ENCODE measurements at regions of chr16 and their contacts with region 1.

Region 1: GRCh38 chr16:22397464-22397863 is 23.0 kb upstream of the CDR2 start:
- DNase-seq: no peak
- ATAC-seq: no peak
- H3K4me3 ChIP-seq: no peak overlapping the region
- H3K27ac ChIP-seq: no peak overlapping the region
- H3K4me1 ChIP-seq: peaks cover 0 to 11% (median 0%) of the 10 kb centered on the region in 9 donors
- H3K27me3 ChIP-seq: no peaks in the 10 kb centered on the region
- CTCF ChIP-seq: no peak

Region 2: GRCh38 chr16:22325598-22326368 is 71.7 kb before region 1 on chr16:
- intact Hi-C with region 1: no loop called
- DNase-seq: no peak
- ATAC-seq: no peak
- H3K4me3 ChIP-seq: no peak overlapping the region
- H3K27ac ChIP-seq: no peak overlapping the region
- H3K4me1 ChIP-seq: peaks cover 0 to 14% (median 4%) of the 10 kb centered on the region in 9 donors
- H3K27me3 ChIP-seq: no peaks in the 10 kb centered on the region
- CTCF ChIP-seq: no peak

Region 3: DNA sequence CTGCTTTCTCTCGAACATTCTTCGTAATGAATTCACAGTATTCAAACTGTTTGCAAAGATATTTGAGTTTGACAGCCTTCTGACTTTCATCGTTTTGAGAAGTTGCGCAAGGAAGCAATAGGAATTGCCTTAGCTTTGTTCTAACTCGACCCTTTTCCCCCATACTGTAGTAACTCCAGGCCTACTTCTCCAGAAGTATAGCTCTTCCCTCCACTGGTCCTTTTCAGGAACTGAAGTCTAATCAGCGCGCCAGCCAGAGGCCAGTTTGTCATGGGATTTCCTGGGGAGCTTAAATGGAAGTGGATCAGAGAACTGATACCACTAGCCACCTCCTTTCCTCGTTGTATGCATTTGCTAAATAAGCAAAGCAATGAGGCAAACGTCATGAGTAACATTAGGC is 51.0 kb before region 1 on chr16:
- intact Hi-C with region 1: loop called in 1 of 10 experiments (anchors 10 kb)
- DNase-seq: no peak
- ATAC-seq: peak in 6 of 8 donors; percentile 29 to 69 (median 43)
- H3K4me3 ChIP-seq: no peak overlapping the region
- H3K27ac ChIP-seq: peak overlapping the region in 4 of 10 donors; percentile 2 to 45 (median 24)
- H3K4me1 ChIP-seq: peaks cover 0 to 16% (median 3%) of the 10 kb centered on the region in 9 donors
- H3K27me3 ChIP-seq: no peaks in the 10 kb centered on the region
- CTCF ChIP-seq: no peak

Region 4: GRCh38 chr16:22739077-22739476 is 341.6 kb after region 1 on chr16:
- intact Hi-C with region 1: no loop called
- DNase-seq: no peak
- ATAC-seq: peak in 2 of 8 donors; percentile 15 to 42
- H3K4me3 ChIP-seq: no peak overlapping the region
- H3K27ac ChIP-seq: no peak overlapping the region
- H3K4me1 ChIP-seq: no peaks in the 10 kb centered on the region
- H3K27me3 ChIP-seq: peaks cover 0 to 12% (median 0%) of the 10 kb centered on the region in 7 donors
- CTCF ChIP-seq: no peak

Region 5: GRCh38 chr16:23013481-23013880 is 616.0 kb after region 1 on chr16:
- intact Hi-C with region 1: loop called in 1 of 10 experiments (anchors 10 kb)
- DNase-seq: no peak
- ATAC-seq: no peak
- H3K4me3 ChIP-seq: no peak overlapping the region
- H3K27ac ChIP-seq: no peak overlapping the region
- H3K4me1 ChIP-seq: no peaks in the 10 kb centered on the region
- H3K27me3 ChIP-seq: peaks cover 0 to 17% (median 10%) of the 10 kb centered on the region in 7 donors
- CTCF ChIP-seq: no peak

Region 6: DNA sequence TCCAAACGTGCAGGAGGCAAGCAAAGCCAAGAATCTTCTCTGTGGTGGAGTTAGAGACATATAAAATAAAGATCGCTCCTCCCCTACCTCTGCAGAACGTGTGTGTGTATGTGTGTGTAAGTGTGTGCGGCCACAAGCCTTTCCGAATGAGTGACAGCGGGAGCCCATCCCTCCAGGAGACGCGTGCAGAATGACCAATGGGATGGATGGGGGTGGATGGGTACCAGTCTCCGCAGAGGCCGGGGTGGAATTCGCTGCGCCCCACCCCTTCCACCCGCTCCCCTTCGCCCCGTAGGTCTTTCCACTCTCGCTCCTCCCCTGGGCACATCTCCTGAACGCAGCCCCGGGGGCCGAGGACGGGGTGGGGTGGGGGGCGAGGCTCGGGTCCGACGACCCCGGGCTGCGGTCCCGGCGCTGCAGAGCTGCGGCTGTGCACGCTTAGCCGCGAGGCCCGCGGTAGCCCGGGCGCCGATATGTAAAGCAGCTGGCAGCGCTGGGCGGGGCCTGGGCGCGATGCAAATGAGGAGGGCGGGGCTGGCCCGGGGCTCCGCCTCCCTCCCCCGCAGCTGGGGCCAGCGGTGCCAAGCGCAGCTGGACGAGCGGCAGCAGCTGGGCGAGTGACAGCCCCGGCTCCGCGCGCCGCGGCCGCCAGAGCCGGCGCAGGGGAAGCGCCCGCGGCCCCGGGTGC is 1438.1 kb after region 1 on chr16 and contains the start of gene PRKCB:
- intact Hi-C with region 1: no loop called
- DNase-seq: peak; percentile 48 to 77
- ATAC-seq: peak; percentile 75 to 92 (median 84)
- H3K4me3 ChIP-seq: peak within 1 kb of the TSS in 8 of 10 donors; percentile 33 to 71 (median 45)
- H3K27ac ChIP-seq: peak within 1 kb of the TSS in 1 of 10 donors; percentile 89
- H3K4me1 ChIP-seq: peaks cover 0 to 25% (median 6%) of the 10 kb centered on the region in 9 donors
- H3K27me3 ChIP-seq: peaks cover 5 to 74% (median 64%) of the 10 kb centered on the region in 7 donors
- CTCF ChIP-seq: no peak
- total RNA-seq, gene PRKCB: 0.55 to 8.8 (median 1.4) TPM